ENCODE measurements at regions of chr2 and their contacts with region 1.

Region 1: DNA sequence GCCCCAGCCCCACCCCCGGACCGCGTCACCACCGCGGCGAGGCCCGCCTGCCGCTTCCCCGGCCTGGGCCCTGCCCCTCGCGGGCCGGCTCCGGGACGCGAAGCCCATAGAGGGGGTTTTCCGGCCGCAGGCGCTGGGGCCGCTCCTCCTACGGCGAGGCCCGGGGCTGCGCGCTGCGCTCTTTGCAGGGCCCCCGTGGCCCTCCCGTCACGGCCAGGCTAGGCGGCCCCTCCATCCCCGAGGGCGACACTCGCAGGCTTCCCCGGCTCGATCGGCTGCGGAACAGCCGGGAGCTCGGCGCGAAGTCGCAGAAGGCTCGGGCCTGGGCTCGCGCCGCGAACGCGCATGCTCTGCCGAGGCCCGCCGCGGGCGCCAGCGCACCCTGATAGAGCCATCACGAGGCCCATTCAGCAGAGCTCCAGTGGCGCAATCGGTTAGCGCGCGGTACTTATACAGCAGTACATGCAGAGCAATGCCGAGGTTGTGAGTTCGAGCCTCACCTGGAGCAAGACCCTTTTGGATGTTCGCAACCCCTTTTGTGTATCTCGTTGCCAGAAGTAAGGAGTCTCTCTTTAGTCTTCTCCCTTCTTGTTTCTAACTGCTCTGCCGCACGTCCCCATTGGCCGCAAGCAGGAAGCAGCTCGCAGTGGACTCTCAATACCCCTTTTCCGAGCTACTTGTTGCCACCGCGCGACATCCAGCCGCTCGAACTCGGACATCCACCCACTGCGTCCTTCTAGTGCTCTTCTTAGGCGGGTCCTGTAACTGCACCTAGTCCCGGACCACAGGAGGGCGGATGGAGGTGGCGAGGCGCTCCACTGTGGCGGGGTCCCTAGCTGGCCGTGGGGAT is 18.0 kb upstream of the HAAO start:
- DNase-seq: peak; percentile 94
- H3K4me3 Mint-ChIP-seq: peak overlapping the region; percentile 89
- H3K27ac Mint-ChIP-seq: peak overlapping the region; percentile 100
- H3K4me1 Mint-ChIP-seq: peaks cover 20% of the 10 kb centered on the region
- H3K27me3 Mint-ChIP-seq: peaks cover 21% of the 10 kb centered on the region

Region 2: DNA sequence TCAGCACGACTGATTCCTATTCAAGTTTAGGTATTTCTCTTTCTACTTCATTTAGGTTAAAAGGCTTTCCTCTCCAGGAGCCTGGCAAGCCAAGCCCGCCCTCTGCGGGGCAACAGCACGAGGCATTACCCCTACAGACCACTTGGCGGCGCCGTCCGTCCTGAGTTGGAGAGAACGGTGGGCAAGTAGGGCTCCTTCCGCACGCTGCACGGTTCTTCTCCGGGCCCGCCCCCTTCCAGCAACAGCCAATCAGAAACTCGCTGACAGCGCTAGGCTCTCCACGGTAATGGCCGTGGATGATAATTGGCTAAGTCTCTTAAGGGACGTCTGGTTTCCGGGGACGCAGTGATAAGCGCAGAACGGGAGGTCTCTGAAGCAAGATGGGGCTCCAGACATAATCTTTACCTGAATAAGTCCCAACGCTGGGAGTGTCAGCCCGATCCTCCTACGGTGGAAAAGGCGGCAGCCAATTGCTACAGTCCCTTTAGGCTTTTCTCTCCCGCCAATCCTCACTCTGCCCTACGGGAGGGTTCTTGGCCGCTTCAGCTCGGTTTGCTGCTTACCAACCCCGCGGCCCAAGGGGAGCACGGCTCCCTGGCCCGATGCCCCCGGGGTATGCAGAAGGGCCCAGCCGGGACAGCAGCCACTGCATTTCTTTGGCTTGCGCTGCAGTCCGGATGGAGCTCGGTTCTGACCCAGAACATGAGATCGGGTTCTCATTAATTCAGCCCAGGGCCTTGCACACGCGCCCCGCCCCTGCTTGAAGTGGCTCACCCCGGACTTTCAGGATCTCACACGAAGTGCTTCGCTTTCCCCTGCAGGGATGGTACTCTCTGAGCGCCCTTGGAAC is 969.4 kb before region 1 on chr2:
- intact Hi-C with region 1: loop called (anchors 1 kb)
- DNase-seq: peak; percentile 93
- H3K4me3 Mint-ChIP-seq: peak overlapping the region; percentile 96
- H3K27ac Mint-ChIP-seq: peak overlapping the region; percentile 83
- H3K4me1 Mint-ChIP-seq: peaks cover 8% of the 10 kb centered on the region
- H3K27me3 Mint-ChIP-seq: peaks cover 11% of the 10 kb centered on the region

Region 3: DNA sequence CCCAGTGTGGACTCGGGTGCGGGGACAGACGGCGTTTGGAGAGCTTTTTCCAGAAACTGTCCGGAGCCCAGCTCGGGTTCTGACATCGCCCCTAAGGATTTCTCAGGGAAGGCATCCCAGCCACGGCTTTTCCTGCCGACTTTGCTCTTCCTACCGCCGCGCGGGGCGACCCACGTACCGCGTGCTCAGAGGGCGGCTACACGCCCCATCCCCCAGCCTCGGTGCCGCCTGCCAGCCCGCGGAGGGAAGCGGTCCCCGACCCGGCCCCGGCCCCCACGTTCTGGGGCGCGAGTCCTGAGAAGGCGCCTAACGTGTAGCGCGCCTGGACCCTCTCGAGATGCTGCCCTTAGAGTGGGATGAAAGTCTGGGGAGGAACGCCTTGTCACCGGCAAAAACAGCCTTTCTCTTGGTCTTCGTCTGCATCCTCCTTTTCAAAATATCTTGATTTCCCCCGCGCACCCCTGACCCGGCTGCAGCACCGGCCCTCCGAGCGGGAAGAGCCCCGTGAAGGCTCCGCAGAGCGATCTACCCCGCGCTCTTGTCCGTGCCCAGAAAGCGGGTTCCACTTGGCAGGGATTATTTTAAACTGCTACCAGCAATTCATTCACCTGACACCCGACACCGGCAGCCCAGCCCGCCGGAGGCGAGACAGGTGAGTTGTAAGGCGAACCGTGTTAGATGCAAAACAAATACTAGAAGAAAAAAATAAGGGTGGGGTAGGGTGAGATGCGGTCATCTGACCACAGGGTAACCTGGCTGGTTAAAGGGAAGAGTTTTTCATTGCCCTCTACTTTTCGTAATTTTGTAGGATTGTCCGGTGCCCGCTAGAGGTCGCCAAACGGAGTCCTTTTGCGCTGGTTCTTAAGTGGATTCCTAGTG is 315.8 kb before region 1 on chr2:
- intact Hi-C with region 1: loop called (anchors 1 kb)
- DNase-seq: peak; percentile 57
- H3K4me3 Mint-ChIP-seq: peak overlapping the region; percentile 89
- H3K27ac Mint-ChIP-seq: peak overlapping the region; percentile 82
- H3K4me1 Mint-ChIP-seq: peaks cover 9% of the 10 kb centered on the region
- H3K27me3 Mint-ChIP-seq: peaks cover 40% of the 10 kb centered on the region

Region 4: GRCh38 chr2:42722320-42723190 is 87.8 kb before region 1 on chr2:
- intact Hi-C with region 1: loop called (anchors 1 kb)
- DNase-seq: peak; percentile 28
- H3K4me3 Mint-ChIP-seq: peak overlapping the region; percentile 11
- H3K27ac Mint-ChIP-seq: peak overlapping the region; percentile 45
- H3K4me1 Mint-ChIP-seq: peaks cover 13% of the 10 kb centered on the region
- H3K27me3 Mint-ChIP-seq: no peaks in the 10 kb centered on the region

Region 5: GRCh38 chr2:42828487-42829425 is 18.4 kb after region 1 on chr2:
- intact Hi-C with region 1: loop called (anchors 1 kb)
- DNase-seq: peak; percentile 52
- H3K4me3 Mint-ChIP-seq: no peak overlapping the region
- H3K27ac Mint-ChIP-seq: no peak overlapping the region
- H3K4me1 Mint-ChIP-seq: peaks cover 16% of the 10 kb centered on the region
- H3K27me3 Mint-ChIP-seq: peaks cover 14% of the 10 kb centered on the region

Region 6: GRCh38 chr2:42874949-42875801 is 64.8 kb after region 1 on chr2:
- intact Hi-C with region 1: no loop called
- DNase-seq: no peak
- H3K4me3 Mint-ChIP-seq: no peak overlapping the region
- H3K27ac Mint-ChIP-seq: no peak overlapping the region
- H3K4me1 Mint-ChIP-seq: peaks cover 18% of the 10 kb centered on the region
- H3K27me3 Mint-ChIP-seq: no peaks in the 10 kb centered on the region

Region 7: DNA sequence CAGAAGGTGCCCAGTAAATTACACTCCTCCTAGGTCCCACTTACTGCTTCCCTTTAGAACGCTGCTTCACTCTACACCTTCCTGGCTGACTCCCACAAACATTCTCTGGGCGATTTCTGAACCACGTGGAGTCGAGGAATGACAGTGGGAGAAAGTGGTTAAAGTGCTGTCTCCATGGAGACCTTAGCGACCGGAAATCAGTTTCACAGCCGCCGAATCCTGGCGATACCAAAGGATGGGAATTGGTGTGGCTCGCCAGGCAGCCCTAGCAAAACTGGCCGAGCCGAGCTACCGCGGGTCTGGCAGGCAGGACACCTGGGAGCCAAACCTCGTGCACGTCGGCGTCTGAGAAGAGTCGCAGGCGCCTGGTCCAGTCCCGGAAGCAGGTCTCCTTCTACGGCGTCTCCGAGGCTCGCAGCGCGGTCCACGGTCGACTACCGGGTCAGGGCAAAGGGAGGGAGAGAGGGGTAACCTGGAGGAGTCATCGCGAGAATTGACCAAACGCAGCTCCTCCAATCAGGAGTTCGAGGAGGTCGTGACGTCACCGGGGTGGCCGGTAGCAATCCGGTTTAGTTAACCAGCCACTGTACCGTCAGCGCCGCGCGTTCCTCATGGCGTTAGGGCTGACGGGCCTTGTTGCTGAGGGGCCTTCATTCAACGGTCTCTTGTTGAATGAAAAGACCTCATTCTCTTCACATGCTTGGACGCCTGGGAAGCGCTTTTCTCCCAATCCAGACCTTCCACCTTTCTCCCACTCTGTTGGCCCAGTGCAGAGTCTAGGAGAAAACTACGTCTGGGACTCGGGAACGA is 785.5 kb after region 1 on chr2 and contains the start of gene THADA:
- intact Hi-C with region 1: loop called (anchors 1 kb)
- DNase-seq: peak; percentile 97
- H3K4me3 Mint-ChIP-seq: peak within 1 kb of the TSS; percentile 96
- H3K27ac Mint-ChIP-seq: peak within 1 kb of the TSS; percentile 98
- H3K4me1 Mint-ChIP-seq: peaks cover 42% of the 10 kb centered on the region
- H3K27me3 Mint-ChIP-seq: peaks cover 2% of the 10 kb centered on the region
- total RNA-seq, gene THADA: 49.8 and 51.7 TPM in 2 replicates

Measured in activated T-helper 1 cell treated with anti-CD3 and anti-CD28 coated beads, Interleukin-12 subunit alpha, Interleukin-12 subunit beta, Interleukin-2, Interleukin-4 antibody, amounts not matched to agents 30 ng/mL and 10 ng/mL and 1 ng/mL, durations not matched to agents 14 hours and 24 hours and 36 hours (primary cell).